Dendritic cell treated with granulocyte-macrophage colony-stimulating factor and Interleukin-4, amounts not matched to agents 40 ng/mL and 50 ng/mL, for 4 days (primary cell): ENCODE measurements at regions of chr20 and their contacts with region 1.

Region 1: GRCh38 chr20:11261533-11262000 is 587.8 kb upstream of the JAG1 start:
- H3K4me3 Mint-ChIP-seq: no peak overlapping the region
- H3K27ac Mint-ChIP-seq: no peak overlapping the region
- H3K4me1 Mint-ChIP-seq: no peaks in the 10 kb centered on the region
- H3K27me3 Mint-ChIP-seq: peaks cover 2% of the 10 kb centered on the region

Region 2: GRCh38 chr20:10701586-10701985 is 560.0 kb before region 1 on chr20:
- intact Hi-C with region 1: loop called (anchors 5 kb)
- H3K4me3 Mint-ChIP-seq: no peak overlapping the region
- H3K27ac Mint-ChIP-seq: no peak overlapping the region
- H3K4me1 Mint-ChIP-seq: no peaks in the 10 kb centered on the region
- H3K27me3 Mint-ChIP-seq: no peaks in the 10 kb centered on the region

Region 3: GRCh38 chr20:11168026-11168425 is 93.5 kb before region 1 on chr20:
- intact Hi-C with region 1: no loop called
- H3K4me3 Mint-ChIP-seq: no peak overlapping the region
- H3K27ac Mint-ChIP-seq: peak overlapping the region; percentile 23
- H3K4me1 Mint-ChIP-seq: peaks cover 37% of the 10 kb centered on the region
- H3K27me3 Mint-ChIP-seq: peaks cover 5% of the 10 kb centered on the region